Posterior cingulate gyrus (tissue), 11 donors: ENCODE measurements at regions of chr2 and their contacts with region 1.

Region 1: GRCh38 chr2:100262555-100263320 is 59.6 kb downstream of the LONRF2 start:
- DNase-seq: peak; percentile 66 to 97 (median 84)

Region 2: GRCh38 chr2:99725820-99726219 is 536.9 kb before region 1 on chr2:
- intact Hi-C with region 1: loop called (anchors 5 kb)
- DNase-seq: no peak

Region 3: GRCh38 chr2:100381240-100381639 is 118.5 kb after region 1 on chr2:
- intact Hi-C with region 1: loop called (anchors 1 kb)
- DNase-seq: peak in 8 of 10 donors; percentile 64 to 93 (median 80)